Breast epithelium (tissue), 4 donors: ENCODE measurements at regions of chr14 and their contacts with region 1.

Region 1: GRCh38 chr14:104563742-104564615 is 15.6 kb upstream of the C14orf180 start:
- DNase-seq: peak; percentile 34 to 73
- H3K4me3 ChIP-seq: peak overlapping the region in 1 of 3 donors; percentile 28
- H3K27ac ChIP-seq: no peak overlapping the region
- H3K4me1 ChIP-seq: peaks cover 0 to 8% of the 10 kb centered on the region in 2 donors
- H3K27me3 ChIP-seq: peaks cover 5 to 88% of the 10 kb centered on the region in 2 donors
- CTCF ChIP-seq: peak; percentile 67 to 88 (median 84)
- POLR2A ChIP-seq: no peak

Region 2: GRCh38 chr14:104094709-104095438 is 469.1 kb before region 1 on chr14:
- intact Hi-C with region 1: loop called (anchors 10 kb)
- DNase-seq: peak in 1 of 2 donors; percentile 83
- H3K4me3 ChIP-seq: no peak overlapping the region
- H3K27ac ChIP-seq: no peak overlapping the region
- H3K4me1 ChIP-seq: no peaks in the 10 kb centered on the region
- H3K27me3 ChIP-seq: peaks cover 0 to 40% of the 10 kb centered on the region in 2 donors
- CTCF ChIP-seq: peak; percentile 51 to 84 (median 72)
- POLR2A ChIP-seq: no peak

Region 3: GRCh38 chr14:104137297-104138097 is 426.5 kb before region 1 on chr14:
- intact Hi-C with region 1: loop called (anchors 10 kb)
- DNase-seq: peak; percentile 24 to 67
- H3K4me3 ChIP-seq: peak overlapping the region; percentile 40 to 83 (median 59)
- H3K27ac ChIP-seq: peak overlapping the region in 1 of 2 donors; percentile 43
- H3K4me1 ChIP-seq: peaks cover 10 to 15% of the 10 kb centered on the region in 2 donors
- H3K27me3 ChIP-seq: peaks cover 0 to 64% of the 10 kb centered on the region in 2 donors
- CTCF ChIP-seq: peak; percentile 47 to 86 (median 77)
- POLR2A ChIP-seq: no peak